ENCODE measurements at regions of chr10 and their contacts with region 1.

Region 1: DNA sequence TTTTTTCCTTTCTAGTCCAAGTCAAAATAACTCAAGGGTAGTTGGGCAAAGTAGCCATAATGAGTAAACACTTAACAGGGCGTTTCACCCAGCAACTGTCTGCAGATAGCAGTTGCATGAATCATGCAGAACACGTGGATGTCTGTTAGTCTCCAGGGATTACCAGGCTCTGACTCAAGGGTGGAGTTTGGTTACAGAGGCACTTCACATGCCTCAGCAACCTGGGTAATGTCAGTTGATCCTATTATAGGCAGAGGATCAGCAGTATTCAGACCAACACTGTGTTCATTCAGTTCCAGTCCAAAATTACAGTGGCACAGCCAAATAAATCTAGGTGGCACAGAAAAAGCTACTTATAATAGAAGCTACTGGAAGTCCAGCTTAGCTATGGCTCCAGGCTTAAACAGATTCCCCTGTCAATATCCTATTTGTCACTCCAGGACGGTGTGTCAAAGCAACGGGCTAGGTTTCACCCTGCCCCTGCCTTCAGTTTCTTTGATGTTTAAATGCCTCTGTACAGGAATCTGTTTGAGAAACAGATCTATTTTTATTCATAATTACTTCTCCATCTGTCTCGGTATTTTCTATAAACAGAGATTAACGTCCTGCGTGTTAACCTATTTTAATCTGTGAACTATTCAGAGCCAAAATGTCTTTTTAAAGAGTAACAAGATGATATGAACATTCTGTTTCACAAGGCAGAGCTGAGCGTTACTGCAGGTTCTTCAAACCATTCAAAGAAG is 162.7 kb upstream of the AKR1E2 start:
- DNase-seq: peak; percentile 99
- H3K4me3 ChIP-seq: no peak overlapping the region
- H3K27ac ChIP-seq: peak overlapping the region; percentile 100
- H3K4me1 ChIP-seq: peaks cover 28% of the 10 kb centered on the region
- H3K27me3 ChIP-seq: no peaks in the 10 kb centered on the region
- CTCF ChIP-seq: no peak

Region 2: GRCh38 chr10:3197348-3198003 is 1465.9 kb before region 1 on chr10:
- CTCF ChIA-PET with region 1: no interaction called
- dilution Hi-C with region 1: no loop called
- in situ Hi-C with region 1: no loop called
- intact Hi-C with region 1: loop called (anchors 2 kb)
- DNase-seq: peak; percentile 77
- H3K4me3 ChIP-seq: peak overlapping the region; percentile 28 to 45 (median 30)
- H3K27ac ChIP-seq: no peak overlapping the region
- H3K4me1 ChIP-seq: peaks cover 16% of the 10 kb centered on the region
- H3K27me3 ChIP-seq: peaks cover 12% of the 10 kb centered on the region
- CTCF ChIP-seq: peak; percentile 71 to 98

Region 3: GRCh38 chr10:4344511-4344994 is 318.8 kb before region 1 on chr10:
- CTCF ChIA-PET with region 1: no interaction called
- dilution Hi-C with region 1: no loop called
- in situ Hi-C with region 1: loop called in 1 of 2 experiments (anchors 5 kb)
- intact Hi-C with region 1: no loop called
- DNase-seq: peak; percentile 99
- H3K4me3 ChIP-seq: no peak overlapping the region
- H3K27ac ChIP-seq: peak overlapping the region; percentile 90
- H3K4me1 ChIP-seq: peaks cover 16% of the 10 kb centered on the region
- H3K27me3 ChIP-seq: no peaks in the 10 kb centered on the region
- CTCF ChIP-seq: no peak

Region 4: DNA sequence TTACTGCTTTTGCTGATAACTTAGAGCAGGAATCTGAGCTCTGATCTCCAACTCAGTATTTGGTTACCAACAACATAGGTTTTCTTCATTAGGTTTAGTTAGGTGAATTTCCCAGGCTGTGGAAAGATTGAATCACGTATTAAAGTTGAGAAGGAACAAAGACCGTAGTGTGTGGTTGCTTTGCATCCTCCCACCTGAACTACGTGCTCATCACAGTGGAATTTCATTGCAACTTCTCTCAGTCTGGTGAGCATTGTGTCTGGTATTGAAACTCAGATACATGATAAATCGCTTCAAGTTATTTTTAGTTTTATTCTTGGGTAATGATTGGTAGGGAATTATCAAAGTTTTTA is 23.3 kb after region 1 on chr10:
- CTCF ChIA-PET with region 1: no interaction called
- dilution Hi-C with region 1: no loop called
- in situ Hi-C with region 1: no loop called
- intact Hi-C with region 1: loop called (anchors 1 kb)
- DNase-seq: peak; percentile 99
- H3K4me3 ChIP-seq: peak overlapping the region in 2 of 3 experiments; percentile 34 to 35
- H3K27ac ChIP-seq: peak overlapping the region; percentile 100
- H3K4me1 ChIP-seq: peaks cover 55% of the 10 kb centered on the region
- H3K27me3 ChIP-seq: no peaks in the 10 kb centered on the region
- CTCF ChIP-seq: no peak

Region 5: DNA sequence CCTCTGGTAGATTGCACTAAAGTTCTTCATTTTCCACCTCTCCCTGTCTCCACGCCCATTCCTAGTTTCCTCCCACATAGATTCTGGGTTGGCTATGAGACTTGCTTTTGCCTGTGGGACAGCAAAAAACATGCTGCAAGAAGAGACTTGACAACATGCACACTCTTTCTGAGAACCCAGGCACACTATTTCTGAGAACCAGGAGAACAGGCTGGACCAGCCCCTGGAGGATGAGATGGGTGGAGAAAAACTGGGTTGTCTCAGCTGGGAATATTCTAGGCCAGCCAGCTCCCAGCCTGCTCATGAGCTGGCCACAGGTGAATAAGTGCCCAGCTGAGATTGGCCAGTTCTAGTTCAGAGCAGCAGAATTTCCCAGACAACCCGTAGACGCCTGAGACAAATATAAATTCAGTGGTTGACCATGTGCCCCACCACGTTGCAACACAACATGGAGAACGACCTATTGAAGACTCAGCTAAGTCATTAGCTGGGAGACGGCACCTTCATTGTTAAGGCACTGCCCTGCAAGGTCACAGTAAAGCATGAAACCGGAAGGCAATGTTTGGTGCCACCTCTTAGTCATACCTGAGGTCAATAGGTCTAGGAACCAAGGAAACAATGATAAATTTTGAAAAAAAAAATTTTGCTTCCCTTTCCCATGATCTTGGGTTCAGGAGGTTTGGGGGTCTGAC is 70.0 kb after region 1 on chr10:
- CTCF ChIA-PET with region 1: no interaction called
- dilution Hi-C with region 1: no loop called
- in situ Hi-C with region 1: no loop called
- intact Hi-C with region 1: loop called (anchors 2 kb)
- DNase-seq: peak; percentile 96
- H3K4me3 ChIP-seq: no peak overlapping the region
- H3K27ac ChIP-seq: peak overlapping the region; percentile 62
- H3K4me1 ChIP-seq: peaks cover 14% of the 10 kb centered on the region
- H3K27me3 ChIP-seq: no peaks in the 10 kb centered on the region
- CTCF ChIP-seq: peak in 1 of 2 donors; percentile 21